OCI-LY7 (cell line): ENCODE measurements at regions of chr11 and their contacts with region 1.

Region 1: DNA sequence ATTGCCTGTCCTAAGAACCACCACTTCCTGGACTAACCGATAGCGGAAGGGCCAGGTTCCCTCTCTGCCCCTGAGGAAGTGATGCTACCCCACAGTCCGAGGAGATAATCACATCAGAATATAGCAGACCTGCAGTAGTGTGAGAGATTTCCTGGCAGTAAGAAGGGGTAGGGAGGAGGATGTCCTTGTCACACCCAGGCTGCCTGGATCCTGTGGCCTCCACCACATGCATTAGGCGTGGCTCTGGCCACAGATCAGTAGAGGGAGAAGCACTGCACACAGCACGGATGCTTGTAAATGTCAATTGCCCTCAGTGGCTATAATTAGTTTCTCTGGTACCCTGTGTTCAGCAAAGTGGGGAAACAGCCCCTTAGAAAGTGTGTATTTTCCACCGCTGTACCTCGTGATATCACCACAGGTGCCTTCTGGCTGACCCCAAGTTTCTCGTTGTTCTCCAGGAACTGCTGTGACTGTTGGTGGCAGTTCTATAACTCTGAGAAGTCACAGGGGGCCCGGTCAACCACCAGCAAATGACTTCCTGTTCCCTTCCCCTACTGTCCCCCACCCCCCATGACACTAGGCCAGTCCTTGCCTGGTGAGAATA is 61.8 kb downstream of the UBASH3B start:
- DNase-seq: peak; percentile 90
- H3K4me3 ChIP-seq: peak overlapping the region; percentile 47
- H3K27ac ChIP-seq: peak overlapping the region; percentile 92
- H3K4me1 ChIP-seq: peaks cover 95% of the 10 kb centered on the region
- CTCF ChIP-seq: no peak

Region 2: GRCh38 chr11:121757480-121758125 is 959.8 kb before region 1 on chr11:
- CTCF ChIA-PET with region 1: no interaction called
- POLR2A ChIA-PET with region 1: no interaction called
- intact Hi-C with region 1: no loop called
- DNase-seq: no peak
- H3K4me3 ChIP-seq: no peak overlapping the region
- H3K27ac ChIP-seq: no peak overlapping the region
- H3K4me1 ChIP-seq: peaks cover 2% of the 10 kb centered on the region
- CTCF ChIP-seq: no peak

Region 3: GRCh38 chr11:122601141-122602125 is 115.9 kb before region 1 on chr11:
- CTCF ChIA-PET with region 1: no interaction called
- POLR2A ChIA-PET with region 1: no interaction called
- intact Hi-C with region 1: no loop called
- DNase-seq: no peak
- H3K4me3 ChIP-seq: no peak overlapping the region
- H3K27ac ChIP-seq: no peak overlapping the region
- H3K4me1 ChIP-seq: no peaks in the 10 kb centered on the region
- CTCF ChIP-seq: no peak

Region 4: DNA sequence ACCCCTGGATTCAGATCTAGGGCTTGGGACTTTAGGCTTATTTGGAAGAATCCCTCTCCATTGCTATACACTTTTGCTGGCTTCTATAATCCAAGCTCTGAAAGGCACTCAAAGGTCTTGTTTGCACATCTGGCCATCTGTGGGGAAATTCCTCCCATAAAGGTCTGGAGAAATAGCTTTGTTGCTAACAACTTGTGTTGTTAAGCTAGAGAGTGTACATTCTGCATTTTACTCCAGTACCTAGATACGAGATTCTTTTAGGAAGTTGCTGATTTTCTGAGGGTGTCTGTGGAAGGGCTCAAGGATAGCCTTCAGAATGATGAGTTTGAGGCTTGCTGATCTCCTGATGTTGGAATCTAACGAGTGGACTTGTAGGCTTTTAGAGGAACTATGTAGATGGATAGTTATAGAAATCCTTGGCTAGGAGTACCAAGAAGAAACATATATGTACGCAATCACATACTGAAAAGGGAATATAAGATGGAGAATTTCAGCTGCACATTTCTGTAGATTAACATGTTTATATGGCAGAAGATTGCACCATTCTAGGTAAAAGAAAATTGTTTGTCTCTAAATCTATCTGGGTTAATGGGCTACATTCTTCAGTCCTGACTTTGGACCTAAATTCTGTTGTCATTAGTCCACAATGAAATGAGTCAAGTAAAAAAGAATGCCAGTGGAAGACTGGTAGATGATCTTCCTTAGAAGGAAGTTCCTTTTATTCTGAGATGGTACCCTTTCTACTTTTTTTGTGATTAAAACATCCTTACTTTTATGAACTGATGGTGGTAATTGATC is 10.9 kb before region 1 on chr11:
- CTCF ChIA-PET with region 1: interaction called, 7 read pairs
- POLR2A ChIA-PET with region 1: interaction called, 77 read pairs
- intact Hi-C with region 1: no loop called
- DNase-seq: no peak
- H3K4me3 ChIP-seq: no peak overlapping the region
- H3K27ac ChIP-seq: no peak overlapping the region
- H3K4me1 ChIP-seq: peaks cover 56% of the 10 kb centered on the region
- CTCF ChIP-seq: no peak